ENCODE measurements at regions of chr3 and their contacts with region 1.

Region 1: GRCh38 chr3:153257673-153258351 is 95.8 kb downstream of the RAP2B start:
- DNase-seq: no peak
- ATAC-seq: no peak
- H3K4me3 ChIP-seq: no peak overlapping the region
- H3K4me3 Mint-ChIP-seq: no peak overlapping the region
- H3K27ac ChIP-seq: no peak overlapping the region
- H3K27ac Mint-ChIP-seq: no peak overlapping the region
- H3K4me1 ChIP-seq: no peaks in the 10 kb centered on the region
- H3K4me1 Mint-ChIP-seq: no peaks in the 10 kb centered on the region
- H3K27me3 ChIP-seq: no peaks in the 10 kb centered on the region
- H3K27me3 Mint-ChIP-seq: no peaks in the 10 kb centered on the region
- CTCF ChIP-seq: no peak

Region 2: DNA sequence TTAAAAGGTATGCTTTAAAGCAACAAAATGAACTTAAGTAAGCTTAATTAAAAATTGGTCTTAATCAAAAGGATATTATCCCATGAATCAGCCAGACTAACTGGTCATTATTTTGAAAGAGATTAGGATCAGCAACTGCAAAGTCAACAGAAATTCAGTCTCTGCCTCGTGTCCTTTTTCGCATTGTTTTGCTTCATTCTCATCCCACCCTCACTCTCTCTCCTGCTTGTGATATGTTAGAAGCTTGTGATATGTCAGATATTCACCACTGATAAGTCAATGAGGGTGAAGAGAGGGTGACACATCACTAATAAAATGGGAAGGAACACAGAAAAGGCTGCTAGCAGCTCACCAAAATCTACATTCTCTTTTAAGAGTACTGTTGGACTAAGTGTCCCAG is 1238.3 kb before region 1 on chr3:
- CTCF ChIA-PET with region 1: no interaction called
- POLR2A ChIA-PET with region 1: no interaction called
- intact Hi-C with region 1: loop called (anchors 5 kb)
- DNase-seq: no peak
- ATAC-seq: no peak
- H3K4me3 ChIP-seq: no peak overlapping the region
- H3K4me3 Mint-ChIP-seq: no peak overlapping the region
- H3K27ac ChIP-seq: no peak overlapping the region
- H3K27ac Mint-ChIP-seq: no peak overlapping the region
- H3K4me1 ChIP-seq: no peaks in the 10 kb centered on the region
- H3K4me1 Mint-ChIP-seq: no peaks in the 10 kb centered on the region
- H3K27me3 ChIP-seq: peaks cover 0 to 4% (median 2%) of the 10 kb centered on the region in 4 experiments
- H3K27me3 Mint-ChIP-seq: peaks cover 7% of the 10 kb centered on the region
- CTCF ChIP-seq: no peak